A673 (cell line): ENCODE measurements at regions of chr21 and their contacts with region 1.

Region 1: GRCh38 chr21:25607151-25608043 is at the start of gene MRPL39:
- DNase-seq: peak; percentile 95
- H3K4me3 ChIP-seq: peak within 1 kb of the TSS; percentile 86
- H3K27ac ChIP-seq: peak within 1 kb of the TSS; percentile 94
- H3K4me1 ChIP-seq: peaks cover 4% of the 10 kb centered on the region
- H3K27me3 ChIP-seq: no peaks in the 10 kb centered on the region
- CTCF ChIP-seq: peak; percentile 81
- total RNA-seq, gene MRPL39: 57.1 and 57.6 TPM in 2 replicates

Region 2: GRCh38 chr21:25421327-25422028 is 185.9 kb before region 1 on chr21:
- CTCF ChIA-PET with region 1: no interaction called
- POLR2A ChIA-PET with region 1: no interaction called
- intact Hi-C with region 1: loop called (anchors 5 kb)
- DNase-seq: peak; percentile 70
- H3K4me3 ChIP-seq: no peak overlapping the region
- H3K27ac ChIP-seq: no peak overlapping the region
- H3K4me1 ChIP-seq: no peaks in the 10 kb centered on the region
- H3K27me3 ChIP-seq: no peaks in the 10 kb centered on the region
- CTCF ChIP-seq: peak; percentile 66

Region 3: GRCh38 chr21:25734904-25735645 is 127.7 kb after region 1 on chr21 and contains the starts of genes ATP5PF and GABPA:
- CTCF ChIA-PET with region 1: interaction called, 3 read pairs
- POLR2A ChIA-PET with region 1: no interaction called
- intact Hi-C with region 1: loop called (anchors 1 kb)
- DNase-seq: peak; percentile 99
- H3K4me3 ChIP-seq: peak within 1 kb of the TSS; percentile 89
- H3K27ac ChIP-seq: peak within 1 kb of the TSS; percentile 99
- H3K4me1 ChIP-seq: peaks cover 16% of the 10 kb centered on the region
- H3K27me3 ChIP-seq: no peaks in the 10 kb centered on the region
- CTCF ChIP-seq: no peak
- total RNA-seq, gene ATP5PF: 173 and 185 TPM in 2 replicates
- total RNA-seq, gene GABPA: 23.9 and 26.2 TPM in 2 replicates

Region 4: DNA sequence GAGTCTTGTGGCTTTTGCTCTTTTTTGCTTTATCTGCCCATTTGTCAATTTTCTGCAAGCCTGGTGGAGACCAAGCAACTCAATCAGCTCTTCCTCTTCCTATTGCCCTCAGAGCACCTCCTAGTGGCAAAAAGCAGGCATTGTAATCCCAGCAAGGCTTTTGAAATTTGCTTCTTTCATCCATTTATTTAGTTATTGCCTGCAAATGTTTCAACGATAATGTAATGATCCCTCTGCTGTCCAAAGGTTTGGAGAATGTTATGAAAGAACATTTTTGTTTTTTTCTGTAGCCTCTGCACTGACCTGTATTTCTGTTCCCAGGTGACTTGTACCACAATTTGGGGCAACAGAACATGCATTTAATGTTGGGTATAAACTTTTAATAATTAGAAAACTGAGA is 255.2 kb after region 1 on chr21:
- CTCF ChIA-PET with region 1: interaction called, 4 read pairs
- POLR2A ChIA-PET with region 1: no interaction called
- intact Hi-C with region 1: loop called (anchors 5 kb)
- DNase-seq: peak; percentile 56
- H3K4me3 ChIP-seq: no peak overlapping the region
- H3K27ac ChIP-seq: no peak overlapping the region
- H3K4me1 ChIP-seq: peaks cover 24% of the 10 kb centered on the region
- H3K27me3 ChIP-seq: no peaks in the 10 kb centered on the region
- CTCF ChIP-seq: peak; percentile 83

Region 5: GRCh38 chr21:26842976-26843932 is 1235.9 kb after region 1 on chr21:
- CTCF ChIA-PET with region 1: no interaction called
- POLR2A ChIA-PET with region 1: no interaction called
- intact Hi-C with region 1: loop called (anchors 10 kb)
- DNase-seq: peak; percentile 97
- H3K4me3 ChIP-seq: peak overlapping the region; percentile 69
- H3K27ac ChIP-seq: peak overlapping the region; percentile 90
- H3K4me1 ChIP-seq: peaks cover 18% of the 10 kb centered on the region
- H3K27me3 ChIP-seq: no peaks in the 10 kb centered on the region
- CTCF ChIP-seq: peak; percentile 56